Left cardiac atrium (tissue), 4 donors: ENCODE measurements at regions of chr6 and their contacts with region 1.

Region 1: DNA sequence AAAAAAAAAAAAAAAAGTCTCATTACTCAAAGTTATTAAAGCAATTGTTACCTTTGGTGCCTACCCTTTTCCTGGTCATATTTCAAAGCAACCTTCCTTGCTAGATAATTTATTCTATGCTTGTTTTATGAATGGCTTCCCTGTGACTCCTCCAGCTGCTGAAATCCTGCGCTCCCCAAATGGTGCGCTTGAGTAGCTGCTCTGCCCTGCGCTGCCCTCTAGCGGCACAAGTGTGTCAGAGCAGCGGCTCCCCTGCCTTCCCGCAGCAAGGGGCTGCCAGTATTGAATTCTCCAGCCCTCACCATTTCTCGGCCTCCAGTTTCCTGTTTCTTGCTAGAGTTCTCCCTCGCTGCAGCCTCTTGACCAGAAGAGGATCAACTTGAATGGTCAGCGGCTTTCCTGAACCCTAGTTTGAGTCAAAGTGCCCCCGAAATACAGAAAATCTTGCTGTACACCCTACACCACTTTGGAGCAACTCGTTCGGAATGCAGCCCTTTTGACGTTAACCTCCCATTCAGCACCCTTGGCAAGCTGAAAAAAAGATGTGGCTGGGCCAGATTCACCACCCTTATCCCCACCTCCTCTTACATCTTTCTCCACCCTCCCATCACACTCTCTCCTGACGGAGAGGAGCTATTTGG is 60.4 kb upstream of the KLHL31 start:
- DNase-seq: peak; percentile 79
- ATAC-seq: peak; percentile 82 to 86

Region 2: DNA sequence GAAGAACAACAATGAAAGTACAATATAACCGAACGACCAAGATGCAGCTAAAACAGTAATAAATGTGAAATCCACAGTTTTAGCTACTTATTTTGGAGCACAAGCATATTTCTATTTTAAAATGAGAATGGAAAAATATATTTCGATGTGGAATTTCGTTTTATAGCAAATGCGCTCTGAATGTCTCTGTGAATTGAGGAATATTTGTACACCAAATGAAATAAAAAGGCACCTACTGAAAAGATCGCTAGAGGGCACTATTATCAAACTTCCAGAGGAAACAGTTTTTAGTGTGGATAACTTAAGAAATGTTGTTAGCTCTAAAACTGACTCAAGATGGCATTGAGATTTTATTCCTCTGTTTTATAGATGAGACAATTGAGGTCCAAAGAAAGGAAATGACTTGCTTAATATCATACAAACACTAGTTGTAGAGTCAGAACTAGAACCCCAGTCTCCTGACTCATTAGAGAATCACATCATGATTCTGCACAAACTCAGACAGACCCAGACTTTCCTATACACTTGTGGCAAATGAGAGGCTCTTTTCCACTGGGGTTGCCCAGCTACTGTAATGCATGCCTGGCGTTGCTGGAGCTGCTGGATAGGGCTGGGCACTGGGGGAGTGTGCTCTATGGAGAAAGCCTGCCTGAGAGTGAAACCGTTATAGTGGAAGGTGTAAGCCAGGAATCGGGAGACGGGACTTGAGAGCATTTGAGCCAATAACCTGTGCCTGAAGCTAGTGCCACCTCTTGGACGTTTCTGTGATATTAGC is 232.9 kb before region 1 on chr6:
- intact Hi-C with region 1: loop called (anchors 2 to 5 kb)
- DNase-seq: no peak
- ATAC-seq: peak; percentile 78 to 82

Region 3: DNA sequence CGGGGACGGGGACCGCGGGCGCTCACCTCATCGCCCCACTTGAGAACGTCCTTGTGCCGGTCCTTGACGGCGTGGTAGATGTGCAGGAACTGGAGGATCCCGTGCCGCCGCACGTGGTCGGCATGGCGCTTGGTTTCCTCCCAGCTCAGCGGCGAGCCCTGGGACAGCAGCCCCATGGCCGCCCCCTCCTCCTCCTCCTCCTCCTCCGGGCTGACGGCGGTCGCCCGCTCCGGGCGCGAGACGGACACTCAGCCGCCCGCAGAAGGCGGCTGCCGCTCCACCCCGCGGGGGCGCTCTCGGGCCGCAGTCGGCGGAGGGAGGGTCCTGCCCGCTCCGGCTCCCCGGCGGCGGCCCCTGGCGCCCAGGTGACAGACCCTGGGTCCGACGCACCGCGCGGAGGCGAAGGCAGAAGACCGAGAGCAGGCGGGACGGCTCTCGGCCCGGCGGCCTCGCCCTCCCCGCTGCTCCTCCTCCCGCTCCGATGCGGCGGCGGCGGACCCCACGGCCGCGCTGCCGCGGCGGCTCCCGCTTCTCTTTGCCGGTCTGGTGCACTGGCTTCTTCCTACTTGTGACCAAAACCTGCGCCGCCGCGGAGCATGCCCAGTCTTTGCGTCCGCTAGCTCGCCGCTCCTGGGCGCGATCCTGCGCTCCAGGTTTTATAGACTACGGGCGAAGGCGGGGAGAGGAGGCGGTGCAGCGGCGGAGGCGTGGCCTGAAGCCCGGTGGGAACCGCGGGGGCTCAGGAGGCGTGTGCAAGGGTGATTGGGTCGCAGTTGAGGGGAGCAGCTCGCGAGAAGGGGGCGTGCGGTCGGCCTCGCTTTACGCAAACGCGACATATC is 181.2 kb before region 1 on chr6 and contains the start of gene GCLC:
- intact Hi-C with region 1: loop called in 1 of 2 experiments (anchors 5 kb)
- DNase-seq: peak; percentile 96
- ATAC-seq: peak; percentile 80 to 85
- total RNA-seq, gene GCLC: 17.8 to 21.6 TPM